ENCODE measurements at regions of chr4 and their contacts with region 1.

Region 1: DNA sequence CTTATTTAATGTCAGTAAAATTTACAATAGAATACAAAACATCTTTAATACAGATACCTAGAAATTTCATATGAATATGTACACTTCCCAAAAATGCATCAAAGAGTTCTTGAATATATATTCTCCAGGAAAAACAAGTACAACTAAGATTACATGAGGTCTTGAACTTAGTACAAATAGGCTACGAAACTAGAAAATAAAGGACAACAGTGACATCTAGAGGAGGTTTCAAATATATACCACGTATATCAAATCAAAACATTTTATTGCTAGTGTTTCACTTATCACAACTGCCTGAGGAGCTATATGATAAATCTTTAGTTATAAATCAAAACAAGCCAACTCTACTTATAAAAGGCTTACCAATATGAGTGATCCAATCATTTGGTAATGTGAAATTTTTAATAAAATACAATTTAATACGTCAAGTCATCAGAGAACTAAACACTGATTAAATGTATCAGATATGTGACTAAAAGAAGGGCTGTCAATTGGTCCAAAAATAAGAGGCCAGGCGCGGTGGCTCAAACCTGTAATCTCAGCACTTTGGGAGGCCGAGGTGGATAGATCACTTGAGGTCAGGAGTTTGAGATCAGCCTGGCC is 36.6 kb downstream of the ANAPC10 start:
- DNase-seq: no peak
- ATAC-seq: peak; percentile 70
- H3K4me3 Mint-ChIP-seq: no peak overlapping the region
- H3K27ac Mint-ChIP-seq: no peak overlapping the region
- H3K4me1 Mint-ChIP-seq: peaks cover 17% of the 10 kb centered on the region
- H3K27me3 Mint-ChIP-seq: no peaks in the 10 kb centered on the region

Region 2: GRCh38 chr4:144174401-144175067 is 886.9 kb before region 1 on chr4:
- CTCF ChIA-PET with region 1: interaction called, 3 read pairs
- POLR2A ChIA-PET with region 1: no interaction called
- intact Hi-C with region 1: loop called (anchors 1 kb)
- DNase-seq: peak; percentile 42
- ATAC-seq: peak; percentile 84
- H3K4me3 Mint-ChIP-seq: no peak overlapping the region
- H3K27ac Mint-ChIP-seq: peak overlapping the region; percentile 72
- H3K4me1 Mint-ChIP-seq: peaks cover 17% of the 10 kb centered on the region
- H3K27me3 Mint-ChIP-seq: peaks cover 3% of the 10 kb centered on the region

Region 3: GRCh38 chr4:144384408-144384807 is 677.0 kb before region 1 on chr4:
- CTCF ChIA-PET with region 1: no interaction called
- POLR2A ChIA-PET with region 1: no interaction called
- intact Hi-C with region 1: no loop called
- DNase-seq: no peak
- ATAC-seq: no peak
- H3K4me3 Mint-ChIP-seq: no peak overlapping the region
- H3K27ac Mint-ChIP-seq: no peak overlapping the region
- H3K4me1 Mint-ChIP-seq: no peaks in the 10 kb centered on the region
- H3K27me3 Mint-ChIP-seq: peaks cover 2% of the 10 kb centered on the region

Region 4: DNA sequence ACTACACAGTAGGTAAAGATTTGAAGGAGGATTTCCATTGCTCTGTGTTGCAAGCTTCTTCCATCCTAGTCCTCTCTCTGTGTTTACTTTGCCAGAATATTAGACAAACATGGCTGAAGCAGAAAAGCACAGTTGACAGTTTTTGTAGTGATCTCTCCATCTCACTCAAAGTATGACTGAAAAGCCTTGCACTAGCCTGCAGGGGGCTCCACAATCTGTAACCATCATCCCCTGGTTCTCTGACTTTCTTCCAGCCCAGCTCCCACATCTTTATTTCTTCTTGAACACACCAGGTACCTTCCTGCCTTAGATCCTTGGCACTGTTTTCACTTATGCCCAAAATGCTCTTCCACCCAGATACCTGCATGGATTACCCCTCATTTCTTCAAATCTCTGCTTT is 449.6 kb before region 1 on chr4:
- CTCF ChIA-PET with region 1: no interaction called
- POLR2A ChIA-PET with region 1: no interaction called
- intact Hi-C with region 1: loop called in 1 of 2 experiments (anchors 2 kb)
- DNase-seq: peak; percentile 31
- ATAC-seq: no peak
- H3K4me3 Mint-ChIP-seq: no peak overlapping the region
- H3K27ac Mint-ChIP-seq: no peak overlapping the region
- H3K4me1 Mint-ChIP-seq: peaks cover 2% of the 10 kb centered on the region
- H3K27me3 Mint-ChIP-seq: peaks cover 5% of the 10 kb centered on the region

Region 5: DNA sequence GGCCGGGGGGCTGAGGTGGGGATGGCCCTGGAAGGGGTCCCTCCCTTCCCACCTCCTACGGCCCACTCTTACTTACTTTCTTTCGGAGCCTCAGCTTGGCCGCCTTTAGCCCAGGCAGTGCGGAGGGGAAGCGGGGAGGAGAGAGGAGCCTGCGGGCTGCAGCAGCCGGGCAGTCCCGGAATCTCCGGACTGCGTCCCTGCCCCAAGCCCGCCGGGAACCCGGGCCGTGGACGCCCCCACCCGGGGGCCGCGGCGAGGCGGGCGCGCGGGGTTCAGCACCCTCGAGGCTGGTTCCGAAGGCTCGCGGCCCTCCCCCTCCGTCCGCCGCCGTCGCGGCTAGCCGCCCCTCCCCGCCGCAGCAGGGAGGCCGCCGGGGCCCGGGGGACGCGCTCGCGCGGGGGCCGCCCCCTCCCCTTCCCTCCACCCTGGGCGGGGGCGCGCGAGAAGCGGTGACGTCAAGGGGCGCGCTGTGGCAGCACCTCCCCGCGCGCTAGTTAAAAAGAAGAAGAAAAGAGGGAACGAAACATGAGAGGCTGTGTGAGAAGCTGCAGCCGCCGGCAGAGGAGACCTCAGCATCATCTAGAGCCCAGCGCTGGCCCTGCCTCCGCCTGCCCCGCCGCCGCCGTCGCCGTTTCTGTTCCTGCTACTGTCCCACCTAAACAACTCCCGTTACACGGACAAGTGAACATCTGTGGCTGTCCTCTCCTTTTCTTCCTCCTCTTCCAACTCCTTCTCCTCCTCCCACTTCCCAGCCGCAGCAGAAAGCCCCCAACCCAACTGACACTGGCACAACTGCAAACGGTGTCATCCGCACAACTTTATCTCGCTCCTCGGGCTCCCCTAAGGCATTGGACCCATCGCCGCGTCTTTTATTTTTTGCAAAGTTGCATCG is 415.5 kb before region 1 on chr4 and contains the start of gene HHIP:
- CTCF ChIA-PET with region 1: no interaction called
- POLR2A ChIA-PET with region 1: no interaction called
- intact Hi-C with region 1: loop called in 1 of 2 experiments (anchors 10 kb)
- DNase-seq: peak; percentile 58
- ATAC-seq: peak; percentile 62
- H3K4me3 Mint-ChIP-seq: peak within 1 kb of the TSS; percentile 66
- H3K27ac Mint-ChIP-seq: peak within 1 kb of the TSS; percentile 2
- H3K4me1 Mint-ChIP-seq: peaks cover 21% of the 10 kb centered on the region
- H3K27me3 Mint-ChIP-seq: peaks cover 47% of the 10 kb centered on the region
- total RNA-seq, gene HHIP: not detected

Region 6: DNA sequence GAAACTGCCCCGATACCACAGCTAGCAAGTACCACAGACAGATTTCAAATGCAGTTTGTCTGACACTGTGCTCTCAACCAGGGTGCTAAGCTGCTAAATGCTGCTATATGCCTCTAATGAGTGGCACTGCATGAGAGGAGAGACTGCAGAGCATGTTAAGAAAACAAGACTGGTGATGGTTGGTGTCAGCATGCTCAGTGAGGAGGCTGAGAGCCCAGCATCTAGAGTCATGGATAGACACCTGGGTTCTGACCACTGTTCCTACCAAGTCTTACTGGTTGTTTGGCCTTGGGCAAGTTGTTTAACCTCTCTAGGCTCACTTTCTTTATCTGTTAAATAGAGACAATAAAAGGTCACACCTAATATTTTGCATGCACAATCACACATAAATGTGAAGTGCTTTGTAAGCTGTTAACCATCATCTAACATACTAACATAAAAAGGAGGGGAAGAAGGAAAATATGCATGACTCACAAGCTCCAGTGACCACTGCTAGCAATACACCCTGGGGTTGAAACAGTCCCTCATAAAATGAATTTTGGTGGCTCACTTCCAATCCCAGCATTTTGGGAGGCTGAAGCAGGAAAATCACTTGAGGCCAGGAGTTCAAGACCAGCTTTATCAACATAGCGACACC is 394.8 kb before region 1 on chr4:
- CTCF ChIA-PET with region 1: no interaction called
- POLR2A ChIA-PET with region 1: no interaction called
- intact Hi-C with region 1: no loop called
- DNase-seq: no peak
- ATAC-seq: no peak
- H3K4me3 Mint-ChIP-seq: no peak overlapping the region
- H3K27ac Mint-ChIP-seq: no peak overlapping the region
- H3K4me1 Mint-ChIP-seq: no peaks in the 10 kb centered on the region
- H3K27me3 Mint-ChIP-seq: no peaks in the 10 kb centered on the region

Region 7: GRCh38 chr4:144787365-144788258 is 273.8 kb before region 1 on chr4:
- CTCF ChIA-PET with region 1: no interaction called
- POLR2A ChIA-PET with region 1: no interaction called
- intact Hi-C with region 1: loop called in 1 of 2 experiments (anchors 5 kb)
- DNase-seq: no peak
- ATAC-seq: no peak
- H3K4me3 Mint-ChIP-seq: no peak overlapping the region
- H3K27ac Mint-ChIP-seq: no peak overlapping the region
- H3K4me1 Mint-ChIP-seq: no peaks in the 10 kb centered on the region
- H3K27me3 Mint-ChIP-seq: peaks cover 2% of the 10 kb centered on the region

Region 8: DNA sequence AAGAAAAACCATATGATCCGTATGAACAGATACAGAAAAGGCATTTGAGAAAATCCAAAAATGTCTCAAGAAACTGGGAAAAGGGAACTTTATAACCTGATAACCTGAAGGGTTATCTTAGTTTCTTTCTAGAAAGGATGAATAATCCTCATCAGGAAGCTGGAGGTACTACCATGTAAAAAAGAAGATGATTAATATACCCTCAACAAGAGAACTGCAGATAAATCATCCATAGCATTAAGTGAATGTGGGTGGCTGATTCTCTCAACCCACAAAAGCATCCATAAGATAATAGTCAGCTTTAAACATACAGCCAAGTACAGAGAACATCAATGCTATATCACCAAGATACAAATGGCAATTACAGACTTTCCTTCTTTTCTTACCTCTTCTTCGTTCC is 10.1 kb after region 1 on chr4:
- CTCF ChIA-PET with region 1: interaction called, 12 read pairs
- POLR2A ChIA-PET with region 1: no interaction called
- intact Hi-C with region 1: no loop called
- DNase-seq: no peak
- ATAC-seq: peak; percentile 70
- H3K4me3 Mint-ChIP-seq: no peak overlapping the region
- H3K27ac Mint-ChIP-seq: no peak overlapping the region
- H3K4me1 Mint-ChIP-seq: peaks cover 30% of the 10 kb centered on the region
- H3K27me3 Mint-ChIP-seq: no peaks in the 10 kb centered on the region

Region 9: DNA sequence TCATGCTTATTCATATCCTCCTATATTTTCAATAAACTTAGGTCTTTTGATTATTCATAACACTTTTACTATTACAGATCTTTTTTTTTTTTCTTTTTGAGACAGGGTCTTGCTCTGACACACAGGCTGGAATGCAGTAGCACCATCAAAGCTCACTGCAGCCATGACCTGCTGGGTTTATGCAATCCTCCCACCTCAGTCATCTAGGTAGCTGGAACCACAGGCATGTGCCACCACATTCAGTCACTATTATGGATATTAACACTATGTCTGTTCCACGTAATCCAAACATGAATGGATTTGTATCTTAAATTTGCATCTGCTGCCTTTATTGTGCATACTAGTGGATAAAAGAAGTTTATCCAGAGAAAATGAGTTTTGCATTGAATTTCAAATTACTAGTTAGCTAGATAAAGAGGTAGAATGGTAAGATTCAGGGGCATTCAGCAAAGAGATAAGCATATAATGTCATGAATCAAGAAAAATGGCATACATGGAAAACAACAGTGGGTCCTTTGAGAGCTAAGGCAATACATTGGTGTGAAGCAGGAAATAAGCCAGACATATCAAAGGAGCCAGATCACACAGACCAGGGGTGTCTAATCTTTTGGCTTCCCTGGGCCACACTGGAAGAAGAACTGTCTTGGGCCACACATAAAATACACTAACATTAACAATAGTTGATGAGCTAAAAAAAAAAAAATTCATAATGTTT is 22.6 kb after region 1 on chr4:
- CTCF ChIA-PET with region 1: no interaction called
- POLR2A ChIA-PET with region 1: no interaction called
- intact Hi-C with region 1: no loop called
- DNase-seq: peak; percentile 20
- ATAC-seq: peak; percentile 60
- H3K4me3 Mint-ChIP-seq: no peak overlapping the region
- H3K27ac Mint-ChIP-seq: no peak overlapping the region
- H3K4me1 Mint-ChIP-seq: peaks cover 11% of the 10 kb centered on the region
- H3K27me3 Mint-ChIP-seq: no peaks in the 10 kb centered on the region

Region 10: DNA sequence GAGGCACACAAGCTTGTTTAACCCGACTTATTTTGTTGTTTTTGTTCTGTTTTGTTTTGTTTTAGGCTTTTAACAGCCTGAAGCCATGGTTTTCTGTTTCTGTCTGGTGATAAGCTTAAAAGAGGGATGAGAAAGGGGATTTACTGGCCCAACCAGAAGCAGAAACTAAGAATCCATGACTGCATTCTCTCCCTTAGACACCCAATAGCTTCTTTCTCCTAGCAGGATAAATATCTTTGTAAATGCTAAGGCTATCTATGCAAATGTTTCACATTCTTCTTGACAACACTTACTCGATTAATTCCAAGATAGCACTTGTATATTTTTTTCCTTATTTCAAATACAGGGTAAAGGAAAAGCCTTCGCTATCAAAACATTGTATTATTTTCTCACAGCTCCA is 366.6 kb after region 1 on chr4:
- CTCF ChIA-PET with region 1: no interaction called
- POLR2A ChIA-PET with region 1: no interaction called
- intact Hi-C with region 1: no loop called
- DNase-seq: no peak
- ATAC-seq: no peak
- H3K4me3 Mint-ChIP-seq: no peak overlapping the region
- H3K27ac Mint-ChIP-seq: no peak overlapping the region
- H3K4me1 Mint-ChIP-seq: no peaks in the 10 kb centered on the region
- H3K27me3 Mint-ChIP-seq: peaks cover 13% of the 10 kb centered on the region

Measured in activated CD4-positive, alpha-beta T cell treated with anti-CD3 and anti-CD28 coated beads for 36 hours (primary cell).